ENCODE measurements at regions of chr20 and their contacts with region 1.

Region 1: DNA sequence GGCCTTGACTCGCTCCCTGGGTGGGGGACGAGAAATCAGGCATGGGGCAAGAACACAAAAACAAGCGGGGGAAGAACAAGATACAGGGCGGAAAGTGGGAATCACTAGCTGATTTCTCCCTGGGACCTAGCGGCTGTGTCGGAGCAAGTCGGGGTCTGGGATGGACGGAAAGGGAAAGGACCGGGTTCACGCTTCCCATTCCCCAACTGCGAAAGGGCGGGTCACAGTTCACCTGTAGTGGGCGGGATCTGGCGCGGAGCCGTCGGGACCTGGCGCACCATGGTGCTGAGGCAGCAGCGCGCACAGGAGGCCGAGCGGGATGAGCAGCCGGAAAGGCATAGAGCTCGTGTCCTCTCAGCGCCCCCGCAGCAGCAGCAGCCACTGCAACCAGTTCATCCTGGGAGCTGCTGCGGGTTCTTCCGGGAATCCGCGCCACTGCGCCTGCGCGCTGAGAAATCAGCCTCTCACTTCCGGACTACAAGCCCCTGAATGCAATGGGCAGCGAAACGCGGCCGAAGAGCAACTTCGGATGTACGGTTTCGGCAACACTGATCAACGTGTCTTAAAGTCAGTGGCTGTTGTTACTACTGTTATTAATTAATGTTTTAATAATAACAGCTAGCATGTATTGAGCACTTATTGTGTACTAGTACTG is at the start of gene EDEM2:
- DNase-seq: peak; percentile 83 to 97 (median 92)
- ATAC-seq: peak; percentile 85
- H3K4me3 ChIP-seq: peak within 1 kb of the TSS; percentile 77
- H3K4me3 Mint-ChIP-seq: peak within 1 kb of the TSS; percentile 96
- H3K27ac ChIP-seq: peak within 1 kb of the TSS; percentile 37 to 55
- H3K27ac Mint-ChIP-seq: peak within 1 kb of the TSS; percentile 93
- H3K4me1 ChIP-seq: peaks cover 32% of the 10 kb centered on the region
- H3K4me1 Mint-ChIP-seq: peaks cover 44% of the 10 kb centered on the region
- H3K27me3 ChIP-seq: no peaks in the 10 kb centered on the region
- H3K27me3 Mint-ChIP-seq: no peaks in the 10 kb centered on the region
- CTCF ChIP-seq: no peak
- total RNA-seq, gene EDEM2: 12.2 to 12.6 TPM

Region 2: GRCh38 chr20:35092524-35093266 is 54.4 kb before region 1 on chr20 and contains the start of gene TRPC4AP:
- CTCF ChIA-PET with region 1: interaction called, 15 read pairs
- POLR2A ChIA-PET with region 1: interaction called, 9 read pairs
- intact Hi-C with region 1: loop called (anchors 2 kb)
- DNase-seq: peak; percentile 78 to 96 (median 86)
- ATAC-seq: peak; percentile 98
- H3K4me3 ChIP-seq: peak within 1 kb of the TSS; percentile 99
- H3K4me3 Mint-ChIP-seq: peak within 1 kb of the TSS; percentile 91
- H3K27ac ChIP-seq: peak within 1 kb of the TSS; percentile 72 to 76
- H3K27ac Mint-ChIP-seq: peak within 1 kb of the TSS; percentile 83
- H3K4me1 ChIP-seq: peaks cover 40% of the 10 kb centered on the region
- H3K4me1 Mint-ChIP-seq: peaks cover 53% of the 10 kb centered on the region
- H3K27me3 ChIP-seq: no peaks in the 10 kb centered on the region
- H3K27me3 Mint-ChIP-seq: no peaks in the 10 kb centered on the region
- CTCF ChIP-seq: peak; percentile 85
- total RNA-seq, gene TRPC4AP: 56.3 to 60.6 TPM

Region 3: GRCh38 chr20:35207950-35208611 is 61.0 kb after region 1 on chr20:
- CTCF ChIA-PET with region 1: interaction called, 12 read pairs
- POLR2A ChIA-PET with region 1: interaction called, 7 read pairs
- intact Hi-C with region 1: loop called in 1 of 2 experiments (anchors 1 kb)
- DNase-seq: peak; percentile 52 to 85 (median 72)
- ATAC-seq: peak; percentile 82
- H3K4me3 ChIP-seq: no peak overlapping the region
- H3K4me3 Mint-ChIP-seq: no peak overlapping the region
- H3K27ac ChIP-seq: no peak overlapping the region
- H3K27ac Mint-ChIP-seq: no peak overlapping the region
- H3K4me1 ChIP-seq: no peaks in the 10 kb centered on the region
- H3K4me1 Mint-ChIP-seq: no peaks in the 10 kb centered on the region
- H3K27me3 ChIP-seq: no peaks in the 10 kb centered on the region
- H3K27me3 Mint-ChIP-seq: no peaks in the 10 kb centered on the region
- CTCF ChIP-seq: peak; percentile 81

Region 4: GRCh38 chr20:35277531-35278395 is 130.7 kb after region 1 on chr20 and contains the start of gene MMP24OS:
- CTCF ChIA-PET with region 1: interaction called, 7 read pairs
- POLR2A ChIA-PET with region 1: interaction called, 9 read pairs
- intact Hi-C with region 1: loop called in 1 of 2 experiments (anchors 5 kb)
- DNase-seq: peak; percentile 79 to 96 (median 86)
- ATAC-seq: peak; percentile 86
- H3K4me3 ChIP-seq: peak within 1 kb of the TSS; percentile 76
- H3K4me3 Mint-ChIP-seq: peak within 1 kb of the TSS; percentile 96
- H3K27ac ChIP-seq: peak within 1 kb of the TSS; percentile 93 to 95
- H3K27ac Mint-ChIP-seq: peak within 1 kb of the TSS; percentile 97
- H3K4me1 ChIP-seq: peaks cover 39% of the 10 kb centered on the region
- H3K4me1 Mint-ChIP-seq: peaks cover 35% of the 10 kb centered on the region
- H3K27me3 ChIP-seq: no peaks in the 10 kb centered on the region
- H3K27me3 Mint-ChIP-seq: no peaks in the 10 kb centered on the region
- CTCF ChIP-seq: peak; percentile 20
- total RNA-seq, gene MMP24OS: 71.8 to 74.8 TPM

Region 5: DNA sequence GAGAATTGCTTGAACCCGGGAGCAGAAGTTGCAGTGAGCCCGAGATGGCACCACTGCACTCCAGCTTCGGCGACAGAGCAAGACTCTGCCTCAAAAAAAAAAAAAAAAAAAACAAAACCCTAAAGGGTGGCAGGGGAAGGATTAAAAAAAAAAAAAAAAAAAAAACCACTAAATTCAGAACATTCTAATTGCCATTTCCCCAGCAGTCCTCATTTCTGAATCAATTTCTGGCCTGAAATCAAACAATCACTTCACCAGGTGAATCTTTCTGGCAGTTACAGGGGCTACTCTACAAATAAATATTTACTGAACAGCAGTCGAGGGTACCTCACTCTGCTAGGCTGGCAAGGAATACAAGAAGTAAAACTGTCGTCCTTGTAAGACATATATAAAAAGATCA is 263.6 kb after region 1 on chr20:
- CTCF ChIA-PET with region 1: no interaction called
- POLR2A ChIA-PET with region 1: no interaction called
- intact Hi-C with region 1: loop called in 1 of 2 experiments (anchors 5 kb)
- DNase-seq: no peak
- ATAC-seq: no peak
- H3K4me3 ChIP-seq: no peak overlapping the region
- H3K4me3 Mint-ChIP-seq: peak overlapping the region; percentile 96
- H3K27ac ChIP-seq: no peak overlapping the region
- H3K27ac Mint-ChIP-seq: peak overlapping the region; percentile 90
- H3K4me1 ChIP-seq: peaks cover 17% of the 10 kb centered on the region
- H3K4me1 Mint-ChIP-seq: peaks cover 23% of the 10 kb centered on the region
- H3K27me3 ChIP-seq: no peaks in the 10 kb centered on the region
- H3K27me3 Mint-ChIP-seq: no peaks in the 10 kb centered on the region
- CTCF ChIP-seq: no peak